Activated T-helper 1 cell treated with anti-CD3 and anti-CD28 coated beads, Interleukin-12 subunit alpha, Interleukin-12 subunit beta, Interleukin-2, Interleukin-4 antibody, amounts not matched to agents 30 ng/mL and 10 ng/mL and 1 ng/mL, durations not matched to agents 14 hours and 24 hours and 36 hours (primary cell): ENCODE measurements at regions of chr9 and their contacts with region 1.

Region 1: GRCh38 chr9:122754825-122755224 is 12.7 kb downstream of the OR1L6 start:
- DNase-seq: no peak
- H3K4me3 Mint-ChIP-seq: no peak overlapping the region
- H3K27ac Mint-ChIP-seq: no peak overlapping the region
- H3K4me1 Mint-ChIP-seq: no peaks in the 10 kb centered on the region
- H3K27me3 Mint-ChIP-seq: no peaks in the 10 kb centered on the region

Region 2: DNA sequence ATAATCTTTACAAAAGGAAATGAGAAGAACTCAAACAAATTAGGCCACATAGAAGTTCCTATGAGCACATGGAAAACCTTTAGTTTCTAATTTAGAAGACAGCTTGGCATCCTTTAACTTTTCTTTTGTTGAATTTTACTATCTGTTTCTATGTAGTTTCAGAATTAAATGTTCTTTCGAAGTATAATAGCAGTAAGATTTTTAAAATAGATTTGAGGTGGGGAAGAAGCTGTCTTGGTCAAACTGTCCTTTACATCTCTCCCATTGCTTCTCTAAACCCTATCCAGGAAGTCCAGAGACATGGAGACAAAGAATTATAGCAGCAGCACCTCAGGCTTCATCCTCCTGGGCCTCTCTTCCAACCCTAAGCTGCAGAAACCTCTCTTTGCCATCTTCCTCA is 31.1 kb before region 1 on chr9 and contains the start of gene OR1L4:
- intact Hi-C with region 1: loop called (anchors 1 kb)
- DNase-seq: no peak
- H3K4me3 Mint-ChIP-seq: no peak within 1 kb of the TSS
- H3K27ac Mint-ChIP-seq: no peak within 1 kb of the TSS
- H3K4me1 Mint-ChIP-seq: no peaks in the 10 kb centered on the region
- H3K27me3 Mint-ChIP-seq: peaks cover 2% of the 10 kb centered on the region
- total RNA-seq, gene OR1L4: not detected in 2 replicates

Region 3: GRCh38 chr9:123485216-123485615 is 730.4 kb after region 1 on chr9:
- intact Hi-C with region 1: no loop called
- DNase-seq: no peak
- H3K4me3 Mint-ChIP-seq: no peak overlapping the region
- H3K27ac Mint-ChIP-seq: no peak overlapping the region
- H3K4me1 Mint-ChIP-seq: no peaks in the 10 kb centered on the region
- H3K27me3 Mint-ChIP-seq: no peaks in the 10 kb centered on the region